PC-9 (cell line): ENCODE measurements at regions of chr5 and their contacts with region 1.

Region 1: GRCh38 chr5:89268460-89268859 is 385.5 kb upstream of the MEF2C start:
- DNase-seq: peak in 1 of 2 experiments; percentile 16
- H3K4me3 ChIP-seq: no peak overlapping the region
- H3K27ac ChIP-seq: no peak overlapping the region
- H3K4me1 ChIP-seq: no peaks in the 10 kb centered on the region
- H3K27me3 ChIP-seq: no peaks in the 10 kb centered on the region
- CTCF ChIP-seq: no peak

Region 2: GRCh38 chr5:89729623-89730301 is 461.3 kb after region 1 on chr5:
- CTCF ChIA-PET with region 1: no interaction called
- POLR2A ChIA-PET with region 1: no interaction called
- intact Hi-C with region 1: loop called (anchors 10 kb)
- DNase-seq: peak; percentile 9 to 34
- H3K4me3 ChIP-seq: no peak overlapping the region
- H3K27ac ChIP-seq: no peak overlapping the region
- H3K4me1 ChIP-seq: no peaks in the 10 kb centered on the region
- H3K27me3 ChIP-seq: no peaks in the 10 kb centered on the region
- CTCF ChIP-seq: peak; percentile 41; the same call in 1 of the 2 replicates